Sigmoid colon (tissue), 7 donors: ENCODE measurements at regions of chr11 and their contacts with region 1.

Region 1: DNA sequence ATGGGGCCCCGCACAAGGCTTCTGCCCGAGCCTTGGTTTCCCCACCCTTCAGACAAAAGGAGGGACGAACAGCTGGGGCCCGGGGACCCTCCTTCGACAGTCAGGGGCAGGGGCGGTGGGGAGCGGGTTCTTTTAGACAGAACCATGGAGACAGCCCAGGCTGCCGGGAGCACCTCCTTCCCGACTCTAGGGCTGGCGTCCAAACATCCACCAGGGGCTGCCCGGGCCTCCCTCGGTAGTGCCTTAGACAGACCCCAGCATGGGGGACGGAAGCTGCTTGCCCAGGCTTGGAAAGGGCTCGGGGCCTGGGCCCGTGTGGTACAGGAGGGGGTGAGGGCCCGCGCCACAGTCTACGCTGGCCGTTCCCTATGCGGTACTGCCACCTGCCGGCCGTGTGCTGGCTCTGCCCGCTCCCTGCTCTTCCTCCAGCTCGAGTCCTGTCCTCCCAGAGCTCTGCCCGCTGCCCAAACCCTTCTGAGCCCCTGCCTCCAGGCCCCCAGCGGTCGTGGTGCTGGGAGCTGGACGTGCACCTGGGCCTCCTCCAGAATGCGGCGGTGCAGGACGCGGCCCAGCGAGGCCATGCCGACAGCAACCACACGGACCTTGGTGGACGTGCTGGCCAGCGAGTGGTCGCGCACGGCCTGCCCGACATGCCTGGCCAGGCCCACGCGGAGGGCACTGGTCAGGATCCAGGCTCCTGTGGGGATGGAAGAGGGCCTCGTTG is 20.1 kb downstream of the TSSC4 start:
- DNase-seq: peak; percentile 87
- H3K4me3 ChIP-seq: no peak overlapping the region
- H3K27ac ChIP-seq: peak overlapping the region in 2 of 4 donors; percentile 47 to 63
- H3K4me1 ChIP-seq: peaks cover 0 to 19% (median 12%) of the 10 kb centered on the region in 4 donors
- H3K27me3 ChIP-seq: peaks cover 0 to 5% (median 0%) of the 10 kb centered on the region in 3 donors
- CTCF ChIP-seq: peak; percentile 94 to 96 (median 96)
- EP300 ChIP-seq: no peak
- POLR2A ChIP-seq: no peak

Region 2: GRCh38 chr11:1921574-1922141 is 499.0 kb before region 1 on chr11:
- intact Hi-C with region 1: no loop called
- DNase-seq: peak; percentile 78
- H3K4me3 ChIP-seq: no peak overlapping the region
- H3K27ac ChIP-seq: peak overlapping the region in 3 of 4 donors; percentile 27 to 66 (median 49)
- H3K4me1 ChIP-seq: no peaks in the 10 kb centered on the region
- H3K27me3 ChIP-seq: no peaks in the 10 kb centered on the region
- CTCF ChIP-seq: no peak
- EP300 ChIP-seq: no peak
- POLR2A ChIP-seq: no peak

Region 3: DNA sequence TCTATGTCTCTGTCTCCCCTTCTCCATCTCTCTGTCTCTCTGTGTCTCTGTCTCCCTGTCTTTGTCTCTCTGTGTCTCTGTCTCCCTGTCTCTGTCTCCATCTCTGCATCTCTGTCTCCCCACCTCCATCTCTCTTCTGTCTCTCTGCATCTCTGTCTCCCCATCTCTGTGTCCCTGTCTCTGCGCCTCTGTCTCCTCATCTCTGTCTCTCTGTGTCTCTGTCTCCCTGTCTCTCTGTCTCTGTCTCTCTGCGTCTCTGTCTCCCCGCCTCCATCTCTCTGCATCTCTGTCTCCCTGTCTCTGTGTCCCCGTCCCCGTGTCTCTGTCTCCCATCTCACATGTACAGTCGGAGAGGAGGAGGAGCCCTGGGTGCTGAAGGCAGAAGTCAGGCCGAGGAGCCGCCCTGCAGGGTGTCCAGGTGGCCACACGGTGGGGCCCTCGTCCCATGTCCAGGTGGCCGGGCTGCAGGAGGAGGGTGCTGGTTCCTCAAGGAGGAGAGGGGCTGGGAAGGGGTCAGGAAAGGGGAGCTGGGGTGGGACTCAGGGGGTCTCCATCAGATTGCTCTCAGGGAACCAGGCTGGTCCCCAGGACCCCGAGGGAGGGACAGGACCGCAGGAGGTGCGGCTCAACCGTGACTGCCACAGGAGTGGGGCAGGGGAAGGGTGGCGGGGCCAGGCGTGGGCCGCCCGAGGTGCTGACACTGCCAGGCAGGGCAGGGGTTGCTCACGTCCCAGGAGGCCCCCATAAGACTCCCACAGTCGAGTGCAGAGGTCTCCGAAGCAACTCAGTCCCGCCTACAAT is 223.5 kb before region 1 on chr11:
- intact Hi-C with region 1: loop called (anchors 1 kb)
- DNase-seq: peak; percentile 86
- H3K4me3 ChIP-seq: no peak overlapping the region
- H3K27ac ChIP-seq: no peak overlapping the region
- H3K4me1 ChIP-seq: no peaks in the 10 kb centered on the region
- H3K27me3 ChIP-seq: peaks cover 0 to 25% (median 0%) of the 10 kb centered on the region in 3 donors
- CTCF ChIP-seq: peak; percentile 88 to 94 (median 89)
- EP300 ChIP-seq: no peak
- POLR2A ChIP-seq: no peak

Region 4: DNA sequence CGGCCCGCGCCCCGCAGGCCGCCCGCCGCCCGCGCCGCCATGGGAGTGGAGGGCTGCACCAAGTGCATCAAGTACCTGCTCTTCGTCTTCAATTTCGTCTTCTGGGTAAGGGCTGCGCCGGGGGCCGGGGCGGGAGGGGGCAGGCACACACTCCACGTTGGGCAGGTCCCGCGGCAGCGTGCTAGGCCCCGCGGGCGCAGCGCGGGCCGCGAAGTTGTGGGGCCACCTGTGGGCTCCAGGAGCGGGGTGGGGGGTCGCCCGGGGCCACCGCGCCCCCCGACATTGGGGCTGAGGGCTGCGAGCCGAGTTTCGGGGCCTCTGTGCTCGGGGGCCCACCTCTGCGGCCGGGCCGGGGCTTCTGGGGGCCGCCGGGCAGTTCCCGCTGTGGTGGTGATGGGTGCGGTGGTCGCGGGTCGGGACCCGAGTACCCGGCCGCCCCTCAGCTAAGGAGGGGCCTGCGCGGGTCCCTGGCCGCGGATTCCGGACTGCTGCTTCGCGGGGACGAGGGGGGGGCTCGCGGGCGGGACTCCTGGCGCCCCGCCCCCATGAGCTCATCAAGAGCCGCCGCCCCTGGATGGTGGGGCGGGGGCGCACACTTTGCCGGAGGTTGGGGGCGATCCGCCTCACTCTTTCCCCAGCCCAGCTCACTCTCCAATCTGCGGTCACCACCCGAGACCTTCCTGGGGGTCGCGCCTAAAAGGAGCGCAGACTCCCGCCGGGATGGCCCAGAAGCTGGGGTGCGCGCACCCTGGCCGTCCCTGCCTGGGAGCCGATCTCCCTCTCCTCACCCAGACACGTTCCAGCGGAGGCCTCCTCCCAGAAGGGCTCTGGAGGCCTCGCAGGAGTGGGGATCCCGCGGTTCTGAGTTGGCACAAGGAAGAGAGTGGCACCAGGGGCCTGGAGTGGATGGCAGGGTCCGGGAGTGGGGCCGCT is 42.9 kb before region 1 on chr11:
- intact Hi-C with region 1: loop called (anchors 2 kb)
- DNase-seq: peak; percentile 88
- H3K4me3 ChIP-seq: peak overlapping the region; percentile 86 to 100 (median 99)
- H3K27ac ChIP-seq: peak overlapping the region; percentile 99 to 100 (median 100)
- H3K4me1 ChIP-seq: peaks cover 0 to 65% (median 53%) of the 10 kb centered on the region in 4 donors
- H3K27me3 ChIP-seq: no peaks in the 10 kb centered on the region
- CTCF ChIP-seq: no peak
- EP300 ChIP-seq: no peak
- POLR2A ChIP-seq: no peak

Region 5: DNA sequence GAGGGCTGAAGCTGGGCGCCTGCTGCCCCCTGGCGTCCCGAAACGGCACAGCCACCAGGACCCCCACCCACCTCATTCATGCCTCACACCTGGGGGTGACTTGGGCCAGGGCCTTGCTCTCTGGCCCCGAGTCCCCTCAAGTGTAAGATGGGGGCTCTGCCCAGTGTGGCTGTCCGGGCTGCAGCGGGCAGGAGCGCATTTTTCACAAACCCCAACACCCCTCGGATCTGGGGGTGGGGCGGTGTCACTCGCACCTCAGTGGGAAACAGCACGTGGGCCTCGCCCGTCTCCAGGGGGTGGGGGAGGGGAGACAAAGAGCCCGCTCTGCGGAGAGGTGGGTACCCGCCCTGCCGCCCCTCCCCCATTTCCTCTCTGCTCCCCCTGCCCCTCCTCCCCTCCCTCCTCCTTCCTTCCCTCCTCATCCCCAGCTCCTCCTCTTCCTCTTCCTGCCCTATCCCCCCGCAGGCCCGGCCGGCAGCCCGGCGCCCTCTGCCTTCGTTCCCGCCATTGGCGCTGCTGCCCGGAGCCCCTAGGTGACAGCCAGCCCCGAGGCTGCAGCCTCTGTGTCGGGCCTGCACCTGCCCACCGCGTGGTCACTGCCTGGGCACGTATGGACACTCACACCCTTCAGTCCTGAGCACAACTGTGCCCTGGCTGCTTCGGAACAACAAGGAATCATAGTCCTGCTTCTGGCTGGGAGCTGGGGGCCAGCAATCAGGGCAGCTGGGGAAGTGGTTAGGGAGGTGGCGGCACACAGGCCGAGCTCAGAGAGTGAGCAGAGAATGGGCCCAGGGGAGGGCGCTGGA is 471.8 kb after region 1 on chr11:
- intact Hi-C with region 1: loop called (anchors 5 kb)
- DNase-seq: peak; percentile 83
- H3K4me3 ChIP-seq: peak overlapping the region; percentile 21 to 46 (median 30)
- H3K27ac ChIP-seq: peak overlapping the region; percentile 37 to 57 (median 46)
- H3K4me1 ChIP-seq: peaks cover 0 to 37% (median 36%) of the 10 kb centered on the region in 4 donors
- H3K27me3 ChIP-seq: no peaks in the 10 kb centered on the region
- CTCF ChIP-seq: peak; percentile 92 to 97 (median 94)
- EP300 ChIP-seq: no peak
- POLR2A ChIP-seq: no peak